Activated CD8-positive, alpha-beta T cell treated with anti-CD3 and anti-CD28 coated beads for 36 hours (primary cell): ENCODE measurements at regions of chr15 and their contacts with region 1.

Region 1: DNA sequence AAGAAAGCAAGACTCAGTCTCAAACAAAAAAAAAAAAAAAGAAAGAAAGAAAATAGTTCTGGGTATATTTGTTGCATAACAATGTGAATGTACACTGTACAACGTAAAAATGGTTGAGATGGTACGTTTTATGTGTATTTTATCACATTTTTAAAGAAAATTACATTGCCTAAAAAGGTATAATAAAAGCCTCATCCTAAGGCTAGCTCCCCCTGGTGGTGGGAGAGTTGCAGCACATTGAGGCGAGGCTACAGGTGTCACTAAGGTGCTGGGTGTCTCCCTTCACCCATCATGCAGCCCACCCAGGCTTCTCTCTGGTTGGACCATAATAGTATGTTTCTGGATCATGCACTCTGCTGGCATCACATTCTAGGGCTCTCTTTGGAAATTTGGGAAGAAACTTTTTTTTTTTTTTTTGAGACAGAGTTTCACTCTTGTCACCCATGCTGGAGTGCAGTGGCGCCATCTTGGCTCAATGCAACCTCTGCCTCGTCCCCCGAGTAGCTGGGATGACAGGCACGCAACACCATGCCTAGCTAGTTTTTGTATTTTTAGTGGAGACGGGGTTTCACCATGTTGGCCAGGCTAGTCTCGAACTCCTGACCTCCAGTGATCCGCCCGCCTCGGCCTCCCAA is 12.4 kb upstream of the RAB11A start:
- DNase-seq: peak; percentile 91
- ATAC-seq: peak; percentile 71
- H3K4me3 Mint-ChIP-seq: no peak overlapping the region
- H3K27ac Mint-ChIP-seq: no peak overlapping the region
- H3K4me1 Mint-ChIP-seq: peaks cover 12% of the 10 kb centered on the region
- H3K27me3 Mint-ChIP-seq: no peaks in the 10 kb centered on the region
- CTCF ChIP-seq: peak; percentile 89

Region 2: DNA sequence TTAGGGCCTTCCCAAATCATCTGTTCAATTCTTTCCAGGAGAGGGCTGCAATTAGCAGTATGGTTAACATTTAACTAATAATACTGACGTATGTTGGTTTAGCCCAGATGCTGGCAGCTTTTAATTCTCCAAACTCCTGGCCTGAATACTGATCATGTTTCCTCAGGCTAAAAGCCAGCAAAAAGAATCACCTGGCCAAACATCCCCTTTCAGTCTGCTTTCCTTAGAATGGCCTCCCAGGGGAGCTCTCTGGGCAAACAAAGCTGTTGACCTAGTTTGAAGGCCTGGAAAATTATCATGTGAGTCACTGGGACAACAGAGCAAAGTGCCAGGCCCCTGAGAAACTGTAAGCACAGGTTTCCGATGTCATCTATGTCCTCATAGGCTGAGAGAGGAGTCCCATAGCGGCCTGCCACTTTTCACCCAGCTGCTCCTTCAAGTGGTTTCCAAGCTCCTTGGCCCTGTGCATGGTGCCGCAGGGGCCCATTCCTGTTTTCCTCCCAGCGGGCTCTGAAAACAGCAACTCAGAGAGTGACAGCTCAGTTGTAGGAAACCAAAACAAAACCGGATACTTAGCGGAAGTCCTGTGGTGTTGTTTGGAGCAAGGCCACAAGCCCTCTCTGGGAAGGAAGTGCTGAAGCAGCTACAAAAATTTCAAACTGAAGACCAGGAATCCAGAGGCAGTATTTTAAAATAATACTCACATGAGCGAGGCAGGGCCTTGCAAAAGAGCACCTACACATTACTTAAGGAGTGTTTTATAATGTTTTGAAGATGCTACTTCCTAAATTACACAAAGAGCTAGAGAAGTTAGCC is 24.2 kb before region 1 on chr15:
- CTCF ChIA-PET with region 1: interaction called, 13 read pairs
- POLR2A ChIA-PET with region 1: interaction called, 3 read pairs
- intact Hi-C with region 1: no loop called
- DNase-seq: peak; percentile 60
- ATAC-seq: peak; percentile 62
- H3K4me3 Mint-ChIP-seq: peak overlapping the region; percentile 66
- H3K27ac Mint-ChIP-seq: peak overlapping the region; percentile 96
- H3K4me1 Mint-ChIP-seq: peaks cover 43% of the 10 kb centered on the region
- H3K27me3 Mint-ChIP-seq: no peaks in the 10 kb centered on the region
- CTCF ChIP-seq: no peak

Region 3: DNA sequence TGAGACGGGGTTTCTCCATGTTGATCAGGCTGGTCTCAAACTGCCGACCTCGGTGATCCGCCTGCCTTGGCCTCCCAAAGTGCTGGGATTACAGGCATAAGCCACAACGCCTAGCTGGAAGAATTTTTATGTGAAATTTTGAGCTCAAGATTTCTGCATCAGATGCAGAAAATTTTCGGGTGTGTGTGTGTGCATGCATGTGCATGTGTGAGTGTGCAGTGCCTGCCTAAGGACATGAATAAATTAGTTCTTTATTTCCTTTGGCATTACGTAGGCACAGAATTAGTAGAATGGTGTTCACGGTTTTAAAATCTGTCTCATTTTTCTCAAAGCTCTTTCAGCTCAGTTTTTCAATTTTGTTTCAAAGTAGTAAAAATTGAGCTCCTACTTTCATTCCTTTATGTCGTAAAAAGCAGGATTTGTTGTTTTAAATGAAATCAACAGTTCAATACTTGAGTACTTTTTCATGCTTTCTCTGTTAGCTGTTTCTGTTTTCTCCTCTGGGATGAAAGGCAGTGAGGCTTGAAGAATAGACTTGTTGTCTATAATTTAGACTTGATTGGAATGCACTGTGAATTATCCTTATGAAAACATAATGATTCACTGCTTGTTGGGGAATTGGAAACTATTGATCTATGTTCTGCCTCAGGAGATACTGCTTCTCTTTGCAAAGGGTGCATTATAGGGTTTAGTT is 11.0 kb before region 1 on chr15:
- CTCF ChIA-PET with region 1: interaction called, 16 read pairs
- POLR2A ChIA-PET with region 1: interaction called, 3 read pairs
- intact Hi-C with region 1: no loop called
- DNase-seq: no peak
- ATAC-seq: no peak
- H3K4me3 Mint-ChIP-seq: no peak overlapping the region
- H3K27ac Mint-ChIP-seq: no peak overlapping the region
- H3K4me1 Mint-ChIP-seq: no peaks in the 10 kb centered on the region
- H3K27me3 Mint-ChIP-seq: peaks cover 4% of the 10 kb centered on the region
- CTCF ChIP-seq: no peak

Region 4: GRCh38 chr15:65869127-65869953 is 12.4 kb after region 1 on chr15 and contains the start of gene RAB11A:
- CTCF ChIA-PET with region 1: interaction called, 20 read pairs
- POLR2A ChIA-PET with region 1: interaction called, 3 read pairs
- intact Hi-C with region 1: no loop called
- DNase-seq: peak; percentile 98
- ATAC-seq: peak; percentile 94
- H3K4me3 Mint-ChIP-seq: peak within 1 kb of the TSS; percentile 99
- H3K27ac Mint-ChIP-seq: peak within 1 kb of the TSS; percentile 98
- H3K4me1 Mint-ChIP-seq: peaks cover 30% of the 10 kb centered on the region
- H3K27me3 Mint-ChIP-seq: peaks cover 4% of the 10 kb centered on the region
- CTCF ChIP-seq: peak; percentile 19
- total RNA-seq, gene RAB11A: 106 to 113 TPM

Region 5: GRCh38 chr15:66202526-66202925 is 345.6 kb after region 1 on chr15:
- CTCF ChIA-PET with region 1: no interaction called
- POLR2A ChIA-PET with region 1: no interaction called
- intact Hi-C with region 1: no loop called
- DNase-seq: no peak
- ATAC-seq: no peak
- H3K4me3 Mint-ChIP-seq: no peak overlapping the region
- H3K27ac Mint-ChIP-seq: no peak overlapping the region
- H3K4me1 Mint-ChIP-seq: no peaks in the 10 kb centered on the region
- H3K27me3 Mint-ChIP-seq: peaks cover 1% of the 10 kb centered on the region
- CTCF ChIP-seq: no peak